HAP-1 (cell line): ENCODE measurements at regions of chr1 and their contacts with region 1.

Region 1: DNA sequence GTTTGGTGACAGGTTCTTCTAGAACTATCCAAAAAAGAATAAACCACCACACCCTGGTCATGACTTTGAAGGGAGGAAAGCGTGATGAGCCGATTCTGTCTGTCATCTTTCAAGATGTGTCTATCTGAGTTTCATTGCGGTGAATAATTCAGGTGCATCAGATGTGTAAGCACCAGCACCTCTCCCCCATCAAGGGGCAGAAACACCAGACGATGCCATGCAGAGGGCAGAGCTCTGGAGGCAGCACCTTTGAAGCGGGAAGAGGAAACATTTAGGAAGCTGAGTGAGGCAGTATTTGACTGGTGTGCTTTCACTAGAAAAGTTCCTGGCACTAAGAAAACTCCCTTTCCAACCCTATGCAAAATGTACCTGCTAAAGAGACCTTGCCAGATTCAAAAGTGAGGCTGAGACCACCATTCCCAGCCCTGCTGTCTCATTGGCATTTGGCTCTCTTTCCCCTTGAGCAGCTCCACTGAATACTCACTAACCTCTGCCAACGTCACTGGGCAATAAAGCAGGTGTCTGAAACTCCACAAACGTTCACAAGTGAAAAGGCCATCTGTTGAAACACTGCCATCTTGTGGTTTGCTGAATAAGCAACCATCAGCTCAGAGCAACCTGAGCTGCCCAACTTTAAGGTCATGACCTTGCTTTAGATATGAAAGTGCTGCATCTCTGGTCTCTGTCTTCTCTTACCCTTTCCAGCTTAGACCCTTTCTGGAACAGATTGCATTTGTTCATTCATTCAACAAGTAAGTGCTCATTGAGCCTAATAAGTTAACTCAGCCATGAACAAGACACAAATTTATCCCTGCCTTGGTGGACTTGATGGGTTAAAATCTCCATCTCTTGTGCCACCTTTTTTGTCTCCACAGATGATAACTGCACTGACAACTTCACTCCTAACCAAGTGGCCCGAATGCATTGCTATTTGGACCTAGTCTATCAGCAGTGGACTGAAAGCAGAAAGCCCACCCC is 228.6 kb downstream of the PAPPA2 start:
- DNase-seq: peak; percentile 28 to 39
- H3K4me3 ChIP-seq: no peak overlapping the region
- H3K4me1 ChIP-seq: no peaks in the 10 kb centered on the region
- H3K27me3 ChIP-seq: no peaks in the 10 kb centered on the region

Region 2: GRCh38 chr1:176374967-176375569 is 316.5 kb before region 1 on chr1:
- in situ Hi-C with region 1: loop called (anchors 25 kb)
- DNase-seq: peak; percentile 47 to 84
- H3K4me3 ChIP-seq: no peak overlapping the region
- H3K4me1 ChIP-seq: no peaks in the 10 kb centered on the region
- H3K27me3 ChIP-seq: no peaks in the 10 kb centered on the region

Region 3: GRCh38 chr1:176779992-176780328 is 88.4 kb after region 1 on chr1:
- in situ Hi-C with region 1: no loop called
- DNase-seq: no peak
- H3K4me3 ChIP-seq: no peak overlapping the region
- H3K4me1 ChIP-seq: no peaks in the 10 kb centered on the region
- H3K27me3 ChIP-seq: no peaks in the 10 kb centered on the region